ENCODE measurements at regions of chr19 and their contacts with region 1.

Region 1: DNA sequence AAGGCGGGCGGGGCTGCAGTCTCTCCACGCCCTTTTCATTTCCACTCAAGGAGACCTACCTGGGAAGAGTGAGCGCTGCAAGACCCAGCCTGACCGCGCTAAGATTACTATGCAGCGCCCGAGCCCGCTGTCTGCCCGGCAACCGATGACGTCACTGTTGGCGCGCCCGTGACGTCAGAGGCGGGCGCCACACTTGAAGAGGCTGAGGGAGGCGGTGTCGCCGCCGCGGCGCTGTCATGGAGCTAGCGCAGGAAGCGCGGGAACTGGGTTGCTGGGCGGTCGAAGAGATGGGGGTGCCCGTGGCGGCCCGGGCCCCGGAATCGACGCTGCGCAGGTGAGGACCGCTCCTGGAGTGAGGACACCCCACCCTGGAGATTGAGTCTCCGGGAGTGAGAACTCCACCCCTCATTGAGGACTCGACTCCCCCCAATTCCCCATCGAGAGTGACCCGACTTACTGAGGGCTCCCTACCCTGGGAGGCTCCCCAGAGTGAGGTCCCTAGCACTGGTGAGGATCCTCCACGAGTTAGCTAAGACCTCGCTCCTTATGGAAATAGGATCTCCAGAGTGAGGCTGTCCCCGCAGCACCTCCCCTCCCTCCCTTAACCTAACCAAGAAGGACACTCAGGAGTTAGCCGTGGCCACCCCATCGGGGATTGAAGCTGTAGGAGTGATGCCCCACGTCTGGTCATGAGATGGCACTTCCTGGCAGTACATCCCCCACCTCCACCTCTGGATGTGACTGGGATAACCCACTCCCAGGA is at the start of gene HAUS5:
- DNase-seq: peak; percentile 97 to 98
- ATAC-seq: peak; percentile 94 to 97 (median 96)
- H3K4me3 ChIP-seq: peak within 1 kb of the TSS; percentile 68
- H3K4me3 Mint-ChIP-seq: peak within 1 kb of the TSS; percentile 93
- H3K27ac ChIP-seq: peak within 1 kb of the TSS; percentile 69
- H3K27ac Mint-ChIP-seq: peak within 1 kb of the TSS; percentile 84 to 93
- H3K4me1 ChIP-seq: peaks cover 32% of the 10 kb centered on the region
- H3K4me1 Mint-ChIP-seq: peaks cover 10 to 14% of the 10 kb centered on the region in 2 donors
- H3K27me3 ChIP-seq: no peaks in the 10 kb centered on the region
- H3K27me3 Mint-ChIP-seq: no peaks in the 10 kb centered on the region
- CTCF ChIP-seq: no peak
- total RNA-seq, gene HAUS5: 17.5 to 26.4 (median 21.6) TPM

Region 2: GRCh38 chr19:35318650-35319448 is 293.9 kb before region 1 on chr19:
- intact Hi-C with region 1: no loop called
- DNase-seq: no peak
- ATAC-seq: peak; percentile 38 to 52 (median 40)
- H3K4me3 ChIP-seq: no peak overlapping the region
- H3K4me3 Mint-ChIP-seq: no peak overlapping the region
- H3K27ac ChIP-seq: peak overlapping the region; percentile 5
- H3K27ac Mint-ChIP-seq: peak overlapping the region in 1 of 2 donors; percentile 76
- H3K4me1 ChIP-seq: peaks cover 41% of the 10 kb centered on the region
- H3K4me1 Mint-ChIP-seq: peaks cover 0 to 8% of the 10 kb centered on the region in 2 donors
- H3K27me3 ChIP-seq: no peaks in the 10 kb centered on the region
- H3K27me3 Mint-ChIP-seq: peaks cover 0 to 10% of the 10 kb centered on the region in 2 donors
- CTCF ChIP-seq: no peak

Region 3: DNA sequence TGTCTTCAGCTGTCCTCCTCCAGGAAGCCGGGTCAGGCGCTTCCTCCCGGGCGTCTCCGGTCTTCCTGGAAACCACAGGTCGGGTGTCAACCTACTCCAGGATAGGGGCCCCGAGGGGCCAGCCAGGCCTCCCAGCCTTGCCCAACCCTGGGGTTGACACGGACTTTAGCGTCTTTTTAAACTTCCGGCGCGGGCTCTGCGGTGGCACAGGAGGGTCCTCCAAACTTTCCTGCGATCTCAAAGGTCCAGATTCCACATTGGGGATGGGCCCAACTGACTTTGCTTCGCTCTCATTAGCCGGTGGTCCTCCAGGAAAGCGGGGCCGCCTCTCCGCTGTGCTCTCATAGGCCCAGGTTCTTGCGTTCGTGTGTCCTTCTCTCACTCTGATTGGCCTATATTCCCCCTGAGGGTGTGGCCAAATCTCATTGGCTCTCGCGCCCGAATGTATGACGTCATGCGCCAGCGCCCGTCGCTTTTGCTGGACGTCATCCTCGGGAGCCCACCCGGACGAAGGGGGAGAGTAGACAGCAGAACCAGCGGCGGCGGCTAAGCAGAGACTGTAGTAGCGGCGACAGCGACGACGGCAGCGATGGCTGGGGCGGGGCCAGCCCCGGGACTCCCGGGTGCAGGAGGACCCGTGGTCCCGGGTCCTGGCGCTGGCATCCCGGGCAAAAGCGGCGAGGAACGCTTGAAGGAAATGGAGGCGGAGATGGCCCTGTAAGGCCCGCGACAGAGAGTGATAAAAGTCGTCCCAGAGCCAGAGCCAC is 16.0 kb after region 1 on chr19 and contains the start of gene RBM42:
- intact Hi-C with region 1: loop called (anchors 1 kb)
- DNase-seq: peak; percentile 99
- ATAC-seq: peak; percentile 97 to 100 (median 98)
- H3K4me3 ChIP-seq: peak within 1 kb of the TSS; percentile 86
- H3K4me3 Mint-ChIP-seq: peak within 1 kb of the TSS; percentile 99
- H3K27ac ChIP-seq: peak within 1 kb of the TSS; percentile 89
- H3K27ac Mint-ChIP-seq: peak within 1 kb of the TSS; percentile 96 to 97
- H3K4me1 ChIP-seq: peaks cover 23% of the 10 kb centered on the region
- H3K4me1 Mint-ChIP-seq: peaks cover 26 to 42% of the 10 kb centered on the region in 2 donors
- H3K27me3 ChIP-seq: no peaks in the 10 kb centered on the region
- H3K27me3 Mint-ChIP-seq: no peaks in the 10 kb centered on the region
- CTCF ChIP-seq: no peak
- total RNA-seq, gene RBM42: 51.6 to 61.7 (median 58.2) TPM